AG04450 (cell line): ENCODE measurements at regions of chr1 and their contacts with region 1.

Region 1: GRCh38 chr1:153572569-153573015 is 6.9 kb upstream of the S100A2 start:
- DNase-seq: no peak
- H3K4me3 ChIP-seq: peak overlapping the region; percentile 18; the same call in 1 of the 2 replicates
- H3K27ac ChIP-seq: peak overlapping the region; percentile 77
- H3K27me3 ChIP-seq: no peaks in the 10 kb centered on the region
- CTCF ChIP-seq: peak; percentile 89

Region 2: GRCh38 chr1:153352523-153352922 is 220.1 kb before region 1 on chr1:
- CTCF ChIA-PET with region 1: interaction called, 10 read pairs
- POLR2A ChIA-PET with region 1: no interaction called
- DNase-seq: peak; percentile 30
- H3K4me3 ChIP-seq: no peak overlapping the region
- H3K27ac ChIP-seq: no peak overlapping the region
- H3K27me3 ChIP-seq: peaks cover 6% of the 10 kb centered on the region
- CTCF ChIP-seq: peak; percentile 93

Region 3: GRCh38 chr1:153526132-153526543 is 46.5 kb before region 1 on chr1:
- CTCF ChIA-PET with region 1: interaction called, 165 read pairs
- POLR2A ChIA-PET with region 1: no interaction called
- DNase-seq: no peak
- H3K4me3 ChIP-seq: no peak overlapping the region
- H3K27ac ChIP-seq: no peak overlapping the region
- H3K27me3 ChIP-seq: no peaks in the 10 kb centered on the region
- CTCF ChIP-seq: no peak

Region 4: DNA sequence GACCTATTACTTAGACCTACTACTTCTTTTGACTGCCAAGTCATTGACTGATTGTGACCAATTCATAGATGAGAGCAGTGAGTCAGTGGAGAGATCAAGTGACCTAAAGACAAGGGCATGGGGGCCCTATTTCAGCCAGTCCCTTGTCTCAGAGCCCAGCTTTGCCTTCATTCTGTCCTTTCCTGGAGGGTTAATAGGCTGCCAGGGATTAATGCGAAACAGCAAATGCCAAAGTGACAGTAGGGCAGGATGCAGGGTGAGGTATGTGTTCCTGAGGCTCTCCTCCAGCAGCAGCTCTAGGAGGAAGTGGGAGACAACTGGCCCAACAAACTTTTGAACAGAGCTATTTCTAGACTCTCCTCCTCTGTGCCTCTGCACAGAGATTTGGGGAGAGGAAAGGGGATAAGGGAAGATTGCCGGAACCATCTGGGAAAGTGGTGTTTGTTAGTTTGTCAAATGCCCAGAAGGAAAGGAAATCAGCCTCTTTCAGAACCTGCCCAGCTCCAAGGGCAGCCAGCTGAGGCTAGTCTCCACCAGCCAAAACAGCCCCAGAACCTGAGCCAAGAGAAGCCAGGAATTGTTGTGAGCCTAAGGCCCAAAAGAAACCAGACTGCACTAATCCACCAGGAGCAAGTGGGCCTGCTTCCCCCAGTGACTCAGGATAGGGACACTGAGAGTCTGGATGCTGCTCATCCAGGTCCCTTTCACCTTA is 18.6 kb before region 1 on chr1:
- CTCF ChIA-PET with region 1: interaction called, 14 read pairs
- POLR2A ChIA-PET with region 1: no interaction called
- DNase-seq: no peak
- H3K4me3 ChIP-seq: no peak overlapping the region
- H3K27ac ChIP-seq: peak overlapping the region; percentile 47
- H3K27me3 ChIP-seq: no peaks in the 10 kb centered on the region
- CTCF ChIP-seq: no peak

Region 5: GRCh38 chr1:153608742-153609584 is 36.4 kb after region 1 on chr1:
- CTCF ChIA-PET with region 1: interaction called, 19 read pairs
- POLR2A ChIA-PET with region 1: interaction called, 6 read pairs
- DNase-seq: no peak
- H3K4me3 ChIP-seq: peak overlapping the region; percentile 57
- H3K27ac ChIP-seq: peak overlapping the region; percentile 90
- H3K27me3 ChIP-seq: no peaks in the 10 kb centered on the region
- CTCF ChIP-seq: no peak

Region 6: DNA sequence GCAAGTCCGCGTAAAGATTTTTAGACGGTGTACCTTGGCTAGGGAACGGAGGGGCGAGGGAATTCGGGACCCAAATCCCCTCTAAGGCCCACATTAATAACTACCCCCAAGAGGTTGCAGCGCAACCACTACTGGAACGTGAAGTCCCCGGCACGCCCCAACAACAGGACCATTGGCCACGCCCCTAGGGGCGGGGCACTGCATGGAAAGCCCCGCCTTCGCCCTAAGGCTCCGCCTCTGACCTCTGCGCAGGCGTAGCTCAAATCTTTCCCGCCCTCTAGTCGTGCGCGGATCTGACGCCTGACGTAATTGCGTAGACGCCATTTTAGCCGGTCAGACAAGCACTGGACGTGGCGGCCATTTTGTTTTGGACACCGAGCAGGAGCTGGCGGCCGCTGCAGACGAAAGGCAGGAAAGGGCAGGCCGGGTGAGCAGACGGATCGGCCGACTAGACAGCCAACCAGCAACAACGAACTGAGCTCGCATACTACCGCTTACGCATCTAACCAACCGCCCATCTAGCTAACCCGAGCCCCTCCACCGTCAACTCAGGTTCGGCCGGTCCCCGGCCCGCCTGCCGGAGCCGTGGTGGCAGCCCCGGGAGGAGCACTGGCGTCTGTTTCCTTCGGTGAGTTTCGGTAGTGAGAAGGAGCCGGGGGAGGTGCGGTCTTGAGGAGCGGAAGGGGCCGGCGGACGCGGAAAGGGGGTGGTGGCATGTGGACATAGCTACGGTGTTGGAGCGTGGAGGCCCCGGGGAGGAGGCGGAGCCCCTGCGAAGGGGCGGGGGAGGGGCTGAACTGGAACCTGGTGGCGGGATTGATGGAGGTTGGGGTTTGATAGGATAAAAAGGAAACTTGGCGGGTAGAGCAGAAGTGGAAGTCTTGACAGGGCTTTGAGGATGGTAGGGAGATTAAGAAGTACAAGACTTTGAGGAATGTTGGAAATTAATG is 61.4 kb after region 1 on chr1 and contains the start of gene CHTOP:
- CTCF ChIA-PET with region 1: interaction called, 16 read pairs
- POLR2A ChIA-PET with region 1: interaction called, 14 read pairs
- DNase-seq: peak; percentile 97
- H3K4me3 ChIP-seq: peak within 1 kb of the TSS; percentile 95
- H3K27ac ChIP-seq: peak within 1 kb of the TSS; percentile 100
- H3K27me3 ChIP-seq: no peaks in the 10 kb centered on the region
- CTCF ChIP-seq: no peak
- polyA plus RNA-seq, gene CHTOP: 49.2 and 59.5 TPM in 2 replicates